ENCODE measurements at regions of chr3 and their contacts with region 1.

Region 1: DNA sequence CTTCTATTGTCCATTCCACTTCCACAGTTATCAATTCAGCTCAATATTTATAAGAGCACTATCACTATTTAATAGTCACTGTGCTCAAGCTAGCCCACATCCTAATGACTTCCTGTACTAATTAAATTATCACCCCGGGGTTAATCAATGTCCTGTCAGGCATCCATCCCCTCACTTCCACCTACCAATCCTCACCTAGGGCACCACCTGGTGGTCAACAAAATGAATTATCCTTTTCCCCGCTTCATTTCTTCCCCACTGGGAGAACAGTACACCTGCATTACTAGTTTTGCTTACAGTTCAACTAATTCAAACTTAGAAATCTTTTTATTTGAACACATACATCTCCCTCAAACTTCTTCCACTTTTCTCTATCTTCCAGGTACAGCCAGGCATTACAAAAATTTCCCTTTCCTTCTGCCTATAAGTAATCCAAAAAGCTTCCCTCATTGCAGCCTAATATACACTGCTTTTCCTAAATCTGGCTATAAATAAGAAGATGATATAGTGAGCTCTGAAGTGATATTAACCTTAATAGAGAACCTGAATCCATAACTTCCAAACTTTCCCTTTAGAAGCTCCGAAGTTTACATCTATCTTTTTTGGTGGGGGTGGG is 68.5 kb downstream of the TMCC1 start:
- DNase-seq: peak; percentile 43 to 64 (median 56)
- ATAC-seq: peak; percentile 70; the same call in 1 of the 3 replicates
- H3K4me3 ChIP-seq: no peak overlapping the region
- H3K27ac ChIP-seq: no peak overlapping the region
- H3K4me1 ChIP-seq: peaks cover 0 to 8% of the 10 kb centered on the region in 2 experiments; a peak in 2 of 5 replicates
- H3K27me3 ChIP-seq: no peaks in the 10 kb centered on the region
- CTCF ChIP-seq: peak; percentile 60 to 69 (median 62)
- EP300 ChIP-seq: no peak
- POLR2A ChIP-seq: no peak
- RAD21 ChIP-seq: peak; percentile 80 to 87

Region 2: GRCh38 chr3:129077222-129077621 is 747.8 kb before region 1 on chr3:
- CTCF ChIA-PET with region 1: no interaction called
- POLR2A ChIA-PET with region 1: no interaction called
- in situ Hi-C with region 1: no loop called
- intact Hi-C with region 1: no loop called
- DNase-seq: no peak
- ATAC-seq: no peak
- H3K4me3 ChIP-seq: no peak overlapping the region
- H3K27ac ChIP-seq: no peak overlapping the region
- H3K4me1 ChIP-seq: peaks cover 0 to 6% of the 10 kb centered on the region in 2 experiments; a peak in 3 of 5 replicates
- H3K27me3 ChIP-seq: no peaks in the 10 kb centered on the region
- CTCF ChIP-seq: no peak
- EP300 ChIP-seq: no peak
- POLR2A ChIP-seq: no peak
- RAD21 ChIP-seq: no peak

Region 3: GRCh38 chr3:129399145-129399894 is 425.7 kb before region 1 on chr3:
- CTCF ChIA-PET with region 1: no interaction called
- POLR2A ChIA-PET with region 1: no interaction called
- in situ Hi-C with region 1: loop called (anchors 25 kb)
- intact Hi-C with region 1: no loop called
- DNase-seq: peak; percentile 79 to 92 (median 81)
- ATAC-seq: peak; percentile 86
- H3K4me3 ChIP-seq: peak overlapping the region; percentile 73
- H3K27ac ChIP-seq: peak overlapping the region; percentile 87
- H3K4me1 ChIP-seq: peaks cover 0 to 7% of the 10 kb centered on the region in 2 experiments; a peak in 4 of 5 replicates
- H3K27me3 ChIP-seq: no peaks in the 10 kb centered on the region
- CTCF ChIP-seq: peak; percentile 56 to 73 (median 71)
- EP300 ChIP-seq: no peak
- POLR2A ChIP-seq: no peak; the same call in 1 of the 2 replicates
- RAD21 ChIP-seq: no peak

Region 4: GRCh38 chr3:129490242-129491045 is 334.6 kb before region 1 on chr3:
- CTCF ChIA-PET with region 1: interaction called, 7 read pairs
- POLR2A ChIA-PET with region 1: interaction called, 3 read pairs
- in situ Hi-C with region 1: no loop called
- intact Hi-C with region 1: loop called (anchors 1 kb)
- DNase-seq: peak; percentile 72 to 84 (median 78)
- ATAC-seq: peak; percentile 100
- H3K4me3 ChIP-seq: no peak overlapping the region
- H3K27ac ChIP-seq: peak overlapping the region; percentile 40; the same call in 1 of the 3 replicates
- H3K4me1 ChIP-seq: peaks cover 2 to 6% of the 10 kb centered on the region in 2 experiments; a peak in 3 of 5 replicates
- H3K27me3 ChIP-seq: no peaks in the 10 kb centered on the region
- CTCF ChIP-seq: peak; percentile 75 to 86 (median 82)
- EP300 ChIP-seq: peak; percentile 56
- POLR2A ChIP-seq: no peak
- RAD21 ChIP-seq: peak; percentile 88 to 89

Region 5: DNA sequence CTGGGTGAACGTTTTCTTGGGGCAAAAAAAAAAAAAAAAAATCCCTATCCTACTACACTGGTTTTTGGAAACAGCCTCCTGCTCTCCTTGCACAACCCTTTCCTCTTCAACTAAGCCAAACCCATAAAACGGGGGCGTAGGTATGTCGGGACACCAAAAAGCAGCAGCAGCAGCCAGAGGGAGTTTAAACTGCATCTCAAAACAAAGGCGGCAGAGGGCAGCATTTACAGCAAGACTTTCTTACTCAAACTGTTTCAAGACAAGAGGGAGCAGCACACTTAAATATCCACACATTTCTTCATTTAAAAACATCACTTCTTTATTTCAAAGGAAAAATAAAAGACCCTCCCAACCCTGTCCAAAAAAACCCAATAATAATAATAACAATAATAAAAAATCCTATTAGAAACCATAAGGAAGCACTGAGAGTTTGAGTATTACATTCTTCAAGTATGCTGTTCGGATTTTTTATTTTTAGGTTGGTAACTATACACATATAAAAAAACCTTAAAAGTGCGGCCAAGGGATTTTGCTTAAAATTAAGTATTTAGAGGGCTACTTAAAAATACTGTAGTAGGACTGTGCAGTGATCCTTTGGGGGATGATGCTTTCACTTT is 174.7 kb before region 1 on chr3:
- CTCF ChIA-PET with region 1: interaction called, 54 read pairs
- POLR2A ChIA-PET with region 1: no interaction called
- in situ Hi-C with region 1: loop called (anchors 5 kb)
- intact Hi-C with region 1: loop called (anchors 1 kb)
- DNase-seq: peak; percentile 28 to 74 (median 59)
- ATAC-seq: peak; percentile 80
- H3K4me3 ChIP-seq: no peak overlapping the region
- H3K27ac ChIP-seq: no peak overlapping the region
- H3K4me1 ChIP-seq: no peaks in the 10 kb centered on the region
- H3K27me3 ChIP-seq: no peaks in the 10 kb centered on the region
- CTCF ChIP-seq: peak; percentile 68 to 86 (median 81)
- EP300 ChIP-seq: no peak
- POLR2A ChIP-seq: no peak
- RAD21 ChIP-seq: peak; percentile 77 to 87

Region 6: GRCh38 chr3:129961134-129961541 is 136.1 kb after region 1 on chr3:
- CTCF ChIA-PET with region 1: no interaction called
- POLR2A ChIA-PET with region 1: no interaction called
- in situ Hi-C with region 1: no loop called
- intact Hi-C with region 1: no loop called
- DNase-seq: no peak
- ATAC-seq: no peak
- H3K4me3 ChIP-seq: no peak overlapping the region
- H3K27ac ChIP-seq: no peak overlapping the region
- H3K4me1 ChIP-seq: no peaks in the 10 kb centered on the region
- H3K27me3 ChIP-seq: peaks cover 6 to 31% of the 10 kb centered on the region in 2 experiments
- CTCF ChIP-seq: no peak
- EP300 ChIP-seq: no peak
- POLR2A ChIP-seq: no peak
- RAD21 ChIP-seq: no peak